ENCODE measurements at regions of chr2 and their contacts with region 1.

Region 1: DNA sequence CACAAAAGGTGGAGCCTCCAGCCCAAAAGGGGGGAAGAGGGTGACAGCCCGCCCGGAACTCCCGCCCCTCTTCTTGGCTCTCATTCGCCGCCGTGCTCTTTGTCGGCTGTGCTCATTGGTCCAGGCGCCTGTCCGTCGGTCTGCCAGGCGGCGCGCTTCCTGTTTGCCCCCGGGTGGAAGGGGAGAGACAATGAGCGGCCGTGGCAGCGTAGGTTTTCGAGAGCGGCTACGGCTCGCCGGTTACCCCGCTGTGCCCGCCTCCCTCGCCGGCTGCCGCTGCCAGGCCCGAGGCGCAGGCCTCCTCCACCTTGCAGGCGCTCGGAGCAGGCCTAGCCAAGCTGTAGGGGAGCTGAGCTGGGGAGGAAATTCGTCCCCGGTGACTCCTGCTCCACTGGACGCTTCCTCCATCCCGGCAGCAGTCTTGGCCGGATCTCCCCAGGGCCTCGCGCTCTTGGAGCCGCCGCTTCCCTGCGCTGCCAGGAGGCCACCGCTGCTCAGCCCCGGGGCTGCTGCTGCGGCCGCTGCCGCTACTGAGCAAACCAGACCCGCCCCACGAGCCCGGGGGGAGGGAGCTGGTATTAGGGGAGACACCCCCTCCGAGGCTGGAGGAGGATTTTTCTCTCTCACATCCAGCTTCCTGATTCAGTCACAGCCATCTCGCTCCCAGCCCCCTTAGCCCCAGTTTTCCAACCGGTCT is at the start of gene SP3:
- DNase-seq: peak; percentile 93
- ATAC-seq: peak; percentile 79
- H3K4me3 ChIP-seq: peak within 1 kb of the TSS; percentile 81 to 84
- H3K27ac ChIP-seq: peak within 1 kb of the TSS; percentile 96
- H3K4me1 ChIP-seq: peaks cover 17 to 28% of the 10 kb centered on the region in 2 experiments; a peak in 3 of 4 replicates
- H3K27me3 ChIP-seq: no peaks in the 10 kb centered on the region
- CTCF ChIP-seq: no peak
- POLR2A ChIP-seq: peak; percentile 19
- RAD21 ChIP-seq: peak; percentile 15; the same call in 1 of the 2 replicates
- total RNA-seq, gene SP3: 98.0 TPM

Region 2: GRCh38 chr2:174039551-174040416 is 74.3 kb after region 1 on chr2:
- CTCF ChIA-PET with region 1: no interaction called
- POLR2A ChIA-PET with region 1: no interaction called
- RAD21 ChIA-PET with region 1: no interaction called
- intact Hi-C with region 1: loop called (anchors 2 kb)
- DNase-seq: peak; percentile 94
- ATAC-seq: peak; percentile 88
- H3K4me3 ChIP-seq: peak overlapping the region; percentile 8 to 27; a peak in 3 of 4 replicates
- H3K27ac ChIP-seq: peak overlapping the region; percentile 94
- H3K4me1 ChIP-seq: peaks cover 23 to 42% of the 10 kb centered on the region in 2 experiments
- H3K27me3 ChIP-seq: no peaks in the 10 kb centered on the region
- CTCF ChIP-seq: peak; percentile 81 to 83 (median 82)
- POLR2A ChIP-seq: peak; percentile 38
- RAD21 ChIP-seq: peak; percentile 79

Region 3: DNA sequence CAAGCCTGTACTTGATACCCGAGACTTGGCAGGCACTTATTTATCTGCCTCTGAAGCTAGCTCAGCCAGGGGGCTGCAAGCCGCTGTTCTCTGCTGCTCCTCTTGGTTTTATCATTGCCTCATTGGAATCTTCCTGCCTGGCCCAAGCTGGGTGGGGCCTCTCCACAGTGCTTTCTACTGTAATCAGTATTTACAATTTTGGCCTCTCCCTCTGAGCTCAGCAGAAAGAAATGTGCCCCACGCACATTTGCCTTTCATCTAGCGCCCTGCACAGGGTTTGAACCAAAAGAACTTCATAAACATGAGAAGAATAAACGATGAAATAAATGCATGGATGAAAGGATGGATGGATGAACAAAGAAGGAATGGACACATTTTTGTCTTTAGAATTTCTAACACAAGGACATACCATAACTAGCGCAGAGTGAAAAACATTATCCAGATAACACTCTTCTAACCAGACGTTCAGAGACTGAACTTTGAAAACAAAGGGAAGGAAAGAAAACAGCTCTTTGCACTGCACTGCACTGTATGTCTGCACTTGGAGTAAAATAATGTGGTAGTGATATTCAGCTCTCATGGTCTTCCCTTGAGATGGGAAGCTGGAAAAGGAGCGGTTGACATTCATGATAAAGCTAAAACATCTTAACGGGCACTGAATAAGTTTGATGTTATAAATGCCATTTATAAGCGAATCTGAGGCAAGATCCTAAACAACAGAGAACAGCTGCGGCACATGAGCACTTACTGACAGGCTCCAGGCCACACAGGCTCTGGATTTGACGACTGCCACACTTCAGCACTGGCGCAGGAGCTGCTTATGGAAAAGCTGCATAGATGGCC is 86.5 kb after region 1 on chr2:
- CTCF ChIA-PET with region 1: no interaction called
- POLR2A ChIA-PET with region 1: no interaction called
- RAD21 ChIA-PET with region 1: no interaction called
- intact Hi-C with region 1: loop called (anchors 5 kb)
- DNase-seq: peak; percentile 74
- ATAC-seq: peak; percentile 90
- H3K4me3 ChIP-seq: peak overlapping the region; percentile 4 to 32; a peak in 3 of 4 replicates
- H3K27ac ChIP-seq: peak overlapping the region; percentile 56
- H3K4me1 ChIP-seq: peaks cover 33 to 52% of the 10 kb centered on the region in 2 experiments
- H3K27me3 ChIP-seq: no peaks in the 10 kb centered on the region
- CTCF ChIP-seq: no peak
- POLR2A ChIP-seq: no peak
- RAD21 ChIP-seq: peak; percentile 44; the same call in 1 of the 2 replicates

Region 4: DNA sequence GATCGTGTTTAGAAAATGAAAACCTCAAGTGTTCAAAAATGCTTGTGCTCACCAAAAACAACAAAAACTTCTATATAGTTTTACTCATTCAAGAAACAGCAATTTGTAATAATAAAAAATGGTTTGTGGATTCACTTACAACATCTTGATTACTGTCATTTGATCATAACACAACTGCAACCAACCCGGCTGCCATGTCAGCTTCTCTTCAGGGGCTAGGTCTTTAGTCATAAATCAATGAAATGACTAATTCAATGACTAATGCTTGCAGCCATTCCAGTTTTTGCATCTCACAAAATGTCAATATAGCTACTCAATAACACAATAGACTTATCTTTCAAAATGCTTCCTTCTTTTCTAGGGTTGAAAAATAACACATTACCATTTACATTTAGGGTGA is 154.9 kb after region 1 on chr2:
- CTCF ChIA-PET with region 1: no interaction called
- POLR2A ChIA-PET with region 1: no interaction called
- RAD21 ChIA-PET with region 1: no interaction called
- intact Hi-C with region 1: loop called (anchors 5 kb)
- DNase-seq: peak; percentile 82
- ATAC-seq: no peak
- H3K4me3 ChIP-seq: peak overlapping the region; percentile 12 to 48
- H3K27ac ChIP-seq: peak overlapping the region; percentile 89
- H3K4me1 ChIP-seq: peaks cover 86% of the 10 kb centered on the region in 2 experiments
- H3K27me3 ChIP-seq: no peaks in the 10 kb centered on the region
- CTCF ChIP-seq: no peak
- POLR2A ChIP-seq: no peak
- RAD21 ChIP-seq: peak; percentile 8; the same call in 1 of the 2 replicates

Region 5: DNA sequence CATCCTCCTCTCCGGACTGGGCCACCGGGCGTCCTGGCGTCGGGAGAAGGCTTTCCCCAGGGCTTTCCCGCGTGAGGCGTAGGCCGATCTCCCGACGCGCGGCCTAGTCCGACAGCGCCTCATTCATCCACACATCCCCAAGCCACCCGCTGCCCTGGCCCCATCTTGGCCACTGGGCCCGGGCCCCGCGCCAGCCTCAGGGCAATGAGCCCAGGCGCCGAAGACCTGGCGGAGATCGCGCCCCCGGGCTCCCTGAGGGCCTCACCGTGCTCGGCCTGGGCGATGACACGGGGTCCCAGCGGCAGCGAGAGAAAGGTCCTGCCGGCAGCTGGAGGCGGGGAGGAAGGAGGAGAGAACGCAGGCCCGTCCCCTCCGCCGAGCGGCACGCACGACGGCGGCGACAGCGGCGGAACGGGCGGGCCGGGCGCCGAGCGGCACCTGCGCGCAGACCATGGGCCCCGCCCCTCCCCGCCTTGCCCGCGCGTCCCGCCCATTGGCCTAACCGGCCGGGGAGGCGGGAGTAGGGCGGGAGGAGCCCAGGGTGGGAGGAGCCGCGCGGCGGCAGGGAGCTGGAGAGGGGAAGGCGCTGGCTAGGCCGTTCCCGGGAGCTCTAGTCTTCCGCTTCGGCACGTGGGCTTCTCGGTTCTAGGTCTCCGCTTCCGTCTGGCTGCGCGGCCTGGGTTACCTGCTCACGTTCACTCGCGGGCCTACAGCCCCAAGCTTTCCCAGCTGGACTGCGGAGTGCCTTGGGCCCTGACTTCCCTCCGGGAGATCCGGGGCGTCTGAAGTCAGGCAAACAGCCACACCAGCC is 282.9 kb after region 1 on chr2 and contains the start of gene OLA1:
- CTCF ChIA-PET with region 1: no interaction called
- POLR2A ChIA-PET with region 1: no interaction called
- RAD21 ChIA-PET with region 1: no interaction called
- intact Hi-C with region 1: loop called (anchors 5 kb)
- DNase-seq: peak; percentile 88
- ATAC-seq: peak; percentile 96
- H3K4me3 ChIP-seq: peak within 1 kb of the TSS; percentile 77 to 91
- H3K27ac ChIP-seq: peak within 1 kb of the TSS; percentile 74
- H3K4me1 ChIP-seq: peaks cover 13 to 28% of the 10 kb centered on the region in 2 experiments
- H3K27me3 ChIP-seq: no peaks in the 10 kb centered on the region
- CTCF ChIP-seq: no peak
- POLR2A ChIP-seq: peak; percentile 88
- RAD21 ChIP-seq: no peak; the same call in 1 of the 2 replicates
- total RNA-seq, gene OLA1: 219 TPM